Dendritic cell treated with granulocyte-macrophage colony-stimulating factor and Interleukin-4, amounts not matched to agents 40 ng/mL and 50 ng/mL, for 4 days (primary cell): ENCODE measurements at regions of chr6 and their contacts with region 1.

Region 1: GRCh38 chr6:31665501-31666336 is at the start of gene CSNK2B:
- H3K4me3 Mint-ChIP-seq: peak within 1 kb of the TSS; percentile 94
- H3K27ac Mint-ChIP-seq: peak within 1 kb of the TSS; percentile 95
- H3K4me1 Mint-ChIP-seq: peaks cover 73% of the 10 kb centered on the region
- H3K27me3 Mint-ChIP-seq: no peaks in the 10 kb centered on the region

Region 2: GRCh38 chr6:31541658-31542521 is 123.8 kb before region 1 on chr6 and contains the start of gene DDX39B:
- intact Hi-C with region 1: loop called (anchors 5 kb)
- H3K4me3 Mint-ChIP-seq: peak within 1 kb of the TSS; percentile 86
- H3K27ac Mint-ChIP-seq: peak within 1 kb of the TSS; percentile 91
- H3K4me1 Mint-ChIP-seq: peaks cover 40% of the 10 kb centered on the region
- H3K27me3 Mint-ChIP-seq: no peaks in the 10 kb centered on the region

Region 3: DNA sequence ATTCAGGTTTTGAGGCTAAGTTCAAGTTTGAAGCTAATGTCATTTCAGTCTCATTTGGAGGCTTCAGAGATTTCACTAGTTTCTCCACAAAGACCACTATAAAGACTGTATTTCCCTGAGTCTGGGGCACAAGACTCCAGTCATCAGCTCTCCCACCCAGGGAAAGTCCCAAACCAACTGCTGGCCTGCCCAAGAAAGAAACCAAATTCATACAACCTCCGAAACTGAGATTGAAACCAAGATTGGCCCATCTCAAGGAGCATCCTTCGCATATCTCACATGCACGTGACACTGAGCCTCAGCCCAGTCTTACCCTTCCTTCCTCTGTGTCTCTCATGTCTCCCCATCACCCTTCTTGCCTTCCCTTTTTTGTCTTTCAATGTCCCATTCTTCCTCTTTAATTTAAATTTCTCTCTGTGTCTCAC is 97.2 kb before region 1 on chr6:
- intact Hi-C with region 1: no loop called
- H3K4me3 Mint-ChIP-seq: no peak overlapping the region
- H3K27ac Mint-ChIP-seq: peak overlapping the region; percentile 71
- H3K4me1 Mint-ChIP-seq: peaks cover 46% of the 10 kb centered on the region
- H3K27me3 Mint-ChIP-seq: peaks cover 3% of the 10 kb centered on the region

Region 4: GRCh38 chr6:31619805-31620585 is 45.7 kb before region 1 on chr6:
- intact Hi-C with region 1: loop called (anchors 5 kb)
- H3K4me3 Mint-ChIP-seq: peak overlapping the region; percentile 93
- H3K27ac Mint-ChIP-seq: peak overlapping the region; percentile 96
- H3K4me1 Mint-ChIP-seq: peaks cover 58% of the 10 kb centered on the region
- H3K27me3 Mint-ChIP-seq: no peaks in the 10 kb centered on the region

Region 5: DNA sequence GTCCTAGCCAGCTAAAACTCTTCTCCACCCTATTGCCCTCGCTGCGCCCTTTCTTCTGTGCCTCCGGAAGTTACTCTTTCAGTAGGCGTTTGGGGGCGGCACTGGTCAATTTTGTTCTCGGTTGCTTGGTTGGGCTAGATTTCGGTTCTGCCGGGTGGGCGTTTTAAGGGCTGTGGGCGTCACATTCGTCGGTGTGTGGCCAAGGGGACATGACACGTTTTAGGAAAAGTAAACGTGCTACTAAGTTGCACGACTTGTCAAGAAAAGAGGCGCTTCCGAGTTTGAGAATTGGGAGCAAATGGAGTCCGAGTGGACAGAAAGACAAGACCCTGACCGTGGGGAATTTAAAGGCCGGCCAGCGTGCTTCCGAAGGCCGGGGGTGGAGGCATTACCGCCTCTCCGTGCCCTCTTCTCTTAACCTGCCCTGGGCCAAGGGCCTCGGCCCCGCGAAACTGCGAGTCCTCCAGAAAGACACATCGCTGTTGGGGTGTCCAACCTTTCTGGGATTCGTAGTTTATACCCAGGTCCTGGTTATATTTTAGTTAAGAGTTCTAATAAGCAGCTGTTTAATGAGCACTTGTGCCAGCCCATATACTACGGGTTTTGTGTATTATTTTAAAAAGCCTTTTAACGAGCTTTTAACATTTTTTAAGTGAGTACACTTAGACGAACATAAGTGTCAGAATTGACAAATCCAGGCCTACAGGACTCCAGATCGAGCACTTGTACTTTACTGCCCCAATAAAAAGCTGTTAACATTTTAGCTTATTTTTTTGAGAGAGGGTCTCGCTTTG is 12.6 kb before region 1 on chr6:
- intact Hi-C with region 1: loop called (anchors 1 kb)
- H3K4me3 Mint-ChIP-seq: peak overlapping the region; percentile 94
- H3K27ac Mint-ChIP-seq: peak overlapping the region; percentile 97
- H3K4me1 Mint-ChIP-seq: peaks cover 48% of the 10 kb centered on the region
- H3K27me3 Mint-ChIP-seq: no peaks in the 10 kb centered on the region

Region 6: DNA sequence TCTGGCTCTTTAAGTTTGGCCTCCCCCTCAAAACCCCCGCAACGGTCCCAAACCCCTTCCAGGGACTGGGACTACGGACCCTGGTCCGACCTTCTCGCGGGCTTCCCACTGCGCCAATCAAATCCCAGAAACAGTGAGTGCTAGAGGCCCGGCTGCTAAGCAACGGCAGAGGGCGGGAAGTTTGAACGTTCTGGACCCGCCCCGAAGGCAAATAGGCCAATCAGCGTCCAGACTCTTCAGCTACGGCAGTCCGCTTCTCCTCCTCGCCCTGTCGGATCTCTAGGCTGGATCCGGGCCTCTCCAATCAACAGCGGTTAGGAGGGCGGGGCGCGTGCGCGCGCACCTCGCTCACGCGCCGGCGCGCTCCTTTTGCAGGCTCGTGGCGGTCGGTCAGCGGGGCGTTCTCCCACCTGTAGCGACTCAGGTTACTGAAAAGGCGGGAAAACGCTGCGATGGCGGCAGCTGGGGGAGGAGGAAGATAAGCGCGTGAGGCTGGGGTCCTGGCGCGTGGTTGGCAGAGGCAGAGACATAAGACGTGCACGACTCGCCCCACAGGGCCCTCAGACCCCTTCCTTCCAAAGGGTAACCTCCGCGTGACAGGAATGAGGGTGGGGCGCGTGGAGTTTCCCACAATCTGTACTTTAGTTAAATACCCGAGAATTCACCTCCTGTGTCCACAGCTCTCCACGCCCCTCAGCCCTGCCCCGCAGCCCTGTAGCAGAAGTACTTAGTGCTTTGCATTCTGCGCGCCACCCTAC is 74.1 kb after region 1 on chr6 and contains the start of gene MSH5:
- intact Hi-C with region 1: loop called (anchors 5 kb)
- H3K4me3 Mint-ChIP-seq: peak within 1 kb of the TSS; percentile 87
- H3K27ac Mint-ChIP-seq: peak within 1 kb of the TSS; percentile 91
- H3K4me1 Mint-ChIP-seq: peaks cover 63% of the 10 kb centered on the region
- H3K27me3 Mint-ChIP-seq: no peaks in the 10 kb centered on the region

Region 7: GRCh38 chr6:31752739-31753319 is 87.1 kb after region 1 on chr6:
- intact Hi-C with region 1: no loop called
- H3K4me3 Mint-ChIP-seq: no peak overlapping the region
- H3K27ac Mint-ChIP-seq: no peak overlapping the region
- H3K4me1 Mint-ChIP-seq: no peaks in the 10 kb centered on the region
- H3K27me3 Mint-ChIP-seq: no peaks in the 10 kb centered on the region

Region 8: DNA sequence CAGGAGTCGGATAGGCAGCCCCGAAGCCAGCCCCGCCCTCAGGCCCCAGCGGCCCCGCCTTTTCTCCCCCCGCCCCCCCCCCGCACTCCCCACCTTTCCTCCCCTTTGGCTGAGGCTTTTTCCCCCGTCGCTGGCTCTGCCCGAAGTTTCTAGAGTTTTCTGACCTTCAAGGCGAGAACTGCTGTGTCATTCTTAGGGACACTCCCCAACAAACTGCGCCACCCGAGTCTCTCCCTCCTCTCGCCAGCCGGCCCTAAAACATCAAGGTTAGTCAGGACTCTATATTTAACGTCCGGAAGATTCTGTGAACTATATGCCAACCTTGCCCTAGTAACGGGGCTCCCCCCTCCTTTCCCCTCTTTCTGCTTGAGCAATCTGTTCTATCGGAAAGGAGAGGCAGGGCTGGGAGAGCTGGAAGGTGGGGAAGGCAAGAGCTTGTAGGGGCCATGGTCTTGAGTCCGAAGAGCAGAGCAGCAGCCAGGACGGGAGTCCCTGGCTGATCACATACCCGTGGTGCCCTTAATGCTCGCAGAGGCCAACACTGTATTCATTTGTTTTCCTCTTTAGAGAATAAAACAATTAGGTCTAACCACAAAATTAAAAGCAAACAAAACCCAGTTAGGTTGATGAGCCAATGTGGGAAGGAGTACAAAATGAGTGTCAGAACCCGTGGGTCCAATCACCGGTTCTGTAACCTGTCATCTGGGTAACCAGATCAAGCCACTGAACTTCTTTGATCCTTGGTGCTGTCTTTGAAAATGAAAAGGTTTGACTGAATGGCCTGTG is 156.5 kb after region 1 on chr6:
- intact Hi-C with region 1: loop called (anchors 5 kb)
- H3K4me3 Mint-ChIP-seq: peak overlapping the region; percentile 87
- H3K27ac Mint-ChIP-seq: peak overlapping the region; percentile 96
- H3K4me1 Mint-ChIP-seq: peaks cover 66% of the 10 kb centered on the region
- H3K27me3 Mint-ChIP-seq: no peaks in the 10 kb centered on the region

Region 9: GRCh38 chr6:31834434-31835198 is 168.9 kb after region 1 on chr6:
- intact Hi-C with region 1: no loop called
- H3K4me3 Mint-ChIP-seq: peak overlapping the region; percentile 96
- H3K27ac Mint-ChIP-seq: peak overlapping the region; percentile 97
- H3K4me1 Mint-ChIP-seq: peaks cover 54% of the 10 kb centered on the region
- H3K27me3 Mint-ChIP-seq: no peaks in the 10 kb centered on the region